CD4-positive, alpha-beta T cell (primary cell): ENCODE measurements at regions of chr5 and their contacts with region 1.

Region 1: GRCh38 chr5:82351754-82352145 is 73.6 kb upstream of the RPS23 start:
- DNase-seq: peak in 4 of 14 experiments; percentile 16 to 77 (median 66)
- ATAC-seq: peak; percentile 60
- H3K4me3 ChIP-seq: no peak overlapping the region
- H3K4me3 Mint-ChIP-seq: no peak overlapping the region
- H3K27ac ChIP-seq: no peak overlapping the region
- H3K27ac Mint-ChIP-seq: no peak overlapping the region
- H3K4me1 ChIP-seq: peaks cover 3% of the 10 kb centered on the region
- H3K4me1 Mint-ChIP-seq: peaks cover 3% of the 10 kb centered on the region
- H3K27me3 ChIP-seq: no peaks in the 10 kb centered on the region
- H3K27me3 Mint-ChIP-seq: no peaks in the 10 kb centered on the region
- CTCF ChIP-seq: peak; percentile 93

Region 2: GRCh38 chr5:82158755-82159413 is 192.9 kb before region 1 on chr5:
- CTCF ChIA-PET with region 1: no interaction called
- POLR2A ChIA-PET with region 1: no interaction called
- intact Hi-C with region 1: no loop called
- DNase-seq: no peak
- ATAC-seq: no peak
- H3K4me3 ChIP-seq: no peak overlapping the region
- H3K4me3 Mint-ChIP-seq: no peak overlapping the region
- H3K27ac ChIP-seq: no peak overlapping the region
- H3K27ac Mint-ChIP-seq: no peak overlapping the region
- H3K4me1 ChIP-seq: no peaks in the 10 kb centered on the region
- H3K4me1 Mint-ChIP-seq: no peaks in the 10 kb centered on the region
- H3K27me3 ChIP-seq: no peaks in the 10 kb centered on the region
- H3K27me3 Mint-ChIP-seq: no peaks in the 10 kb centered on the region
- CTCF ChIP-seq: no peak

Region 3: GRCh38 chr5:82287625-82288024 is 64.1 kb before region 1 on chr5:
- CTCF ChIA-PET with region 1: no interaction called
- POLR2A ChIA-PET with region 1: no interaction called
- intact Hi-C with region 1: no loop called
- DNase-seq: no peak
- ATAC-seq: no peak
- H3K4me3 ChIP-seq: no peak overlapping the region
- H3K4me3 Mint-ChIP-seq: no peak overlapping the region
- H3K27ac ChIP-seq: no peak overlapping the region
- H3K27ac Mint-ChIP-seq: no peak overlapping the region
- H3K4me1 ChIP-seq: no peaks in the 10 kb centered on the region
- H3K4me1 Mint-ChIP-seq: no peaks in the 10 kb centered on the region
- H3K27me3 ChIP-seq: no peaks in the 10 kb centered on the region
- H3K27me3 Mint-ChIP-seq: no peaks in the 10 kb centered on the region
- CTCF ChIP-seq: no peak

Region 4: DNA sequence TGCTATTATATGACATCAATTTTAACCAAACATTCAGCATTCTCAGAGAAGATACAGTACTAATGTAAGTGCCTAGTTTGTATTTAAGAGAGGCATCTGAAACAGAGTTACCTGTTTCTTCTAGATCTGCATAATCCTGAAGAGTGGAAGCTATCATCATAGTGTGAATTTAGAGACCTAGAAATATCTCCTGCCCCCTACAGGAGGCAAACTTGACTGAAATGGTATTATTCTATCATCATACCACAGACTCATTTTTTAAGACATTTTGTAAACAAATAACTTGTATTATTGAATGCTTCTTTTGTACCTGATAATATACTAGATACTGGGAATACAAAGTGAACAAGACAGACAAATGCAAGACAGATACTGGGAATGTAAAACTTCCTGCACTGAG is 143.2 kb after region 1 on chr5:
- CTCF ChIA-PET with region 1: interaction called, 3 read pairs
- POLR2A ChIA-PET with region 1: no interaction called
- intact Hi-C with region 1: loop called in 1 of 2 experiments (anchors 10 kb)
- DNase-seq: no peak
- ATAC-seq: no peak
- H3K4me3 ChIP-seq: no peak overlapping the region
- H3K4me3 Mint-ChIP-seq: no peak overlapping the region
- H3K27ac ChIP-seq: no peak overlapping the region
- H3K27ac Mint-ChIP-seq: no peak overlapping the region
- H3K4me1 ChIP-seq: no peaks in the 10 kb centered on the region
- H3K4me1 Mint-ChIP-seq: no peaks in the 10 kb centered on the region
- H3K27me3 ChIP-seq: no peaks in the 10 kb centered on the region
- H3K27me3 Mint-ChIP-seq: no peaks in the 10 kb centered on the region
- CTCF ChIP-seq: no peak

Region 5: GRCh38 chr5:82793808-82794419 is 442.2 kb after region 1 on chr5:
- CTCF ChIA-PET with region 1: no interaction called
- POLR2A ChIA-PET with region 1: no interaction called
- intact Hi-C with region 1: loop called (anchors 2 kb)
- DNase-seq: peak in 11 of 14 experiments; percentile 2 to 54 (median 17)
- ATAC-seq: no peak
- H3K4me3 ChIP-seq: no peak overlapping the region
- H3K4me3 Mint-ChIP-seq: no peak overlapping the region
- H3K27ac ChIP-seq: no peak overlapping the region
- H3K27ac Mint-ChIP-seq: no peak overlapping the region
- H3K4me1 ChIP-seq: no peaks in the 10 kb centered on the region
- H3K4me1 Mint-ChIP-seq: no peaks in the 10 kb centered on the region
- H3K27me3 ChIP-seq: peaks cover 0 to 6% of the 10 kb centered on the region in 2 experiments
- H3K27me3 Mint-ChIP-seq: no peaks in the 10 kb centered on the region
- CTCF ChIP-seq: peak; percentile 74

Region 6: DNA sequence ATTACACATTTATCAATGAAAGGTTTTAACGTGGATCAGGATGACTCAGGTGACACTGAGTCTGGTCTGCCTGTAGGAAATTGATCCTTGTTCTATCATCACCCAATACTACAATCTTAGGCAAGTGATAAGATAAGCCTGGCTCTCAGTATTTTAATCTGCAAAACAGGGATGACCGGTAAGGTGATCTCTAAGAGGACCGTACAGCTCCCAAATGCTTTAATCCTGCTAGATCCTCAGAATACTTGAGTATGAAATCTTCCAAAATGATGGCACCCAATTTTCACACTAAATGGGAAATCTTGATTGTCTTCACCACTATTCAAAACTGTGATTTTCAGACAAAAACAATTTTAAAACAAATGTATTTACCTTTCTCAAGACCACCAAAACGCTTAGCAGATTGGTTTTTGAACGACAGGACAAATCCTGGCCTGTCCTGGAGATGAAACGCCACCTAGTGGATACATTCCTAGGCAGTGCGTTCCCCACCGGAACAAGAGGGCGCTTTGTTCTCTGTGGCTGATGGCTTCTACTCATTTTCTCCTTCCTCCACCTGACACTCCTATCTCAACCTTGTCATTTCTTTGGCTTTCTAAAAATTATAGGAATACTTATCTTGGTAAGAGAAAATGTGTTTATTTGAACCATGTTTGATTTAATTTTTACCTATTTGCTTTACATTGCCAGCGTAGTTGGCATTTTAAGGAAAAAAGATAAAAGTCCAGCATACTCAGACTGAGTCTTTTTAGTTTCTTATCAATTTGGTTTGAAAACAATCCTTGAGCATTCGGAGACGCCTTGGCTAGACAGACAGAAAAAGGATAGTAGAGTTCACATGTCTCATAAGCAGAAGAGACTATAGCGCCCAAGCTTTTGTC is 1078.6 kb after region 1 on chr5:
- CTCF ChIA-PET with region 1: no interaction called
- POLR2A ChIA-PET with region 1: no interaction called
- intact Hi-C with region 1: loop called in 1 of 2 experiments (anchors 2 kb)
- DNase-seq: peak; percentile 7 to 71 (median 26)
- ATAC-seq: peak; percentile 69
- H3K4me3 ChIP-seq: no peak overlapping the region
- H3K4me3 Mint-ChIP-seq: no peak overlapping the region
- H3K27ac ChIP-seq: no peak overlapping the region
- H3K27ac Mint-ChIP-seq: no peak overlapping the region
- H3K4me1 ChIP-seq: no peaks in the 10 kb centered on the region
- H3K4me1 Mint-ChIP-seq: no peaks in the 10 kb centered on the region
- H3K27me3 ChIP-seq: no peaks in the 10 kb centered on the region
- H3K27me3 Mint-ChIP-seq: no peaks in the 10 kb centered on the region
- CTCF ChIP-seq: peak; percentile 72

Region 7: GRCh38 chr5:83564069-83564749 is 1212.5 kb after region 1 on chr5:
- CTCF ChIA-PET with region 1: interaction called, 3 read pairs
- POLR2A ChIA-PET with region 1: no interaction called
- intact Hi-C with region 1: loop called (anchors 1 kb)
- DNase-seq: peak in 3 of 14 experiments; percentile 36 to 55 (median 45)
- ATAC-seq: no peak
- H3K4me3 ChIP-seq: no peak overlapping the region
- H3K4me3 Mint-ChIP-seq: no peak overlapping the region
- H3K27ac ChIP-seq: no peak overlapping the region
- H3K27ac Mint-ChIP-seq: no peak overlapping the region
- H3K4me1 ChIP-seq: no peaks in the 10 kb centered on the region
- H3K4me1 Mint-ChIP-seq: no peaks in the 10 kb centered on the region
- H3K27me3 ChIP-seq: peaks cover 0 to 9% of the 10 kb centered on the region in 2 experiments
- H3K27me3 Mint-ChIP-seq: peaks cover 30% of the 10 kb centered on the region
- CTCF ChIP-seq: peak; percentile 67